ENCODE measurements at regions of chr2 and their contacts with region 1.

Region 1: GRCh38 chr2:100893392-100894089 is 73.6 kb downstream of the NPAS2 start:
- DNase-seq: peak in 2 of 5 donors; percentile 43 to 79
- ATAC-seq: peak in 3 of 4 donors; percentile 63 to 76 (median 76)
- H3K4me3 ChIP-seq: no peak overlapping the region
- H3K27ac ChIP-seq: peak overlapping the region in 11 of 12 donors; percentile 2 to 85 (median 50)
- H3K4me1 ChIP-seq: peaks cover 8 to 70% (median 31%) of the 10 kb centered on the region in 12 donors
- H3K27me3 ChIP-seq: no peaks in the 10 kb centered on the region
- CTCF ChIP-seq: no peak
- POLR2A ChIP-seq: no peak

Region 2: DNA sequence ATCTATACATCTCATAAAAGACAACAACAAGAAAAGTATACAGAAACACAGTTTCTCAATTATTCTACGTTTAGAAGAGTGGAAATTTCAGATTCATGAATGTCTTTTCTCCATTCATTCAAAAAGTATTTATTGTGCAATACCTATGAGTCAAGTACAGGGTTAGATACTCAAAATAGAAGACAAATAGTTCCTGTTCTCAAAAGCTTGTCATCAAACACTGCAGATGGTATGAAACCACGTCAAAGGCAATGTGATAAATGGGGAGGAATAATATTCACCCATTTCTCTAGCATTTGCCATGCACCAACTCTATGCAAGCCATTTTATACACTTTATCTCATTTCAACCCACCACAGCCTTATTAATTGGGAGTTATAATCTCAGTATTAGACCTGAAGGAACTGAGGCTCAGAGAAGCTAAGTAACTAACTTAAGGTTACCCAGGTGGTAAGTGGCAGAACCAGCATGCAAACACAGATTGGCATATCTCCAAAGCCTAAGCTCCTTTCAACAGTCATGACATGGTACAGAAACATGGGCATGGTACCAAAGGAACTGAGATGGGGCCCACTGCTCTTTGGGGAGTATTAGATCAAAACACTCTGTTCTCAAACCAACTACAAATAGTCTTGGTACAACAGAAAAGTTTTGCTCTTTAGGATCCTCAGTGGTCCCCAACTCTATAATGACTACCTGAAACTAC is 140.8 kb before region 1 on chr2:
- intact Hi-C with region 1: loop called in 1 of 10 experiments (anchors 10 kb)
- DNase-seq: no peak
- ATAC-seq: peak; percentile 60 to 85 (median 82)
- H3K4me3 ChIP-seq: no peak overlapping the region
- H3K27ac ChIP-seq: peak overlapping the region in 4 of 12 donors; percentile 8 to 53 (median 26)
- H3K4me1 ChIP-seq: peaks cover 0 to 40% (median 14%) of the 10 kb centered on the region in 12 donors
- H3K27me3 ChIP-seq: no peaks in the 10 kb centered on the region
- CTCF ChIP-seq: no peak
- POLR2A ChIP-seq: no peak

Region 3: GRCh38 chr2:100935372-100935752 is 41.8 kb after region 1 on chr2:
- intact Hi-C with region 1: loop called in 1 of 10 experiments (anchors 5 kb)
- DNase-seq: no peak
- ATAC-seq: peak; percentile 71 to 87 (median 82)
- H3K4me3 ChIP-seq: no peak overlapping the region
- H3K27ac ChIP-seq: peak overlapping the region in 11 of 12 donors; percentile 11 to 89 (median 71)
- H3K4me1 ChIP-seq: peaks cover 0 to 41% (median 15%) of the 10 kb centered on the region in 12 donors
- H3K27me3 ChIP-seq: no peaks in the 10 kb centered on the region
- CTCF ChIP-seq: no peak
- POLR2A ChIP-seq: no peak

Region 4: DNA sequence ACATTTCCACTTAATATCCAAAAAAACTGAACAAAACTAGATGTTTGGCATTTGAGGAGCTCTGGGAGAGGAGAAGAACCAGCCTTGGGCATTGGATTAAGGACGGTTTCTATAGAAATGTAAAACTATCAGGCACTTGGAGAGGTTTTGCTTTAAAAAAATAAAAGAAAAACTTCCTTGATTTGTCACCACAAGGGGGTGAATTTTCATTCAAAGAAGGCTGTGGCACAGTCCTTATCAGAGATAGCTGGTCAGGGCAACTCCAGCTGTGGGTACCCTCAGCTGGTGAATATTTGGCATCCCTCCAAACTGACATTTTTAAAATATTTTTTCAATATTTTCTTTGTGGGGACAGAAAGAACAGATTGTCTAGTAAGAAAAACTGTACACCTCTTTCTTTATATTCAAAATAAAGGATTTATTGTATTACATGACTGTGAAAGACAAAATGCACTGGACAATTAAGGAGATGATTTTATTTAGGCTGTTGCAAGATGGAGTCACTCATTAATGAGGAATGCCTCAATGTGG is 303.7 kb after region 1 on chr2:
- intact Hi-C with region 1: no loop called
- DNase-seq: no peak
- ATAC-seq: no peak
- H3K4me3 ChIP-seq: no peak overlapping the region
- H3K27ac ChIP-seq: no peak overlapping the region
- H3K4me1 ChIP-seq: peaks cover 0 to 20% (median 0%) of the 10 kb centered on the region in 12 donors
- H3K27me3 ChIP-seq: no peaks in the 10 kb centered on the region
- CTCF ChIP-seq: no peak
- POLR2A ChIP-seq: no peak

Region 5: GRCh38 chr2:101479328-101479727 is 585.8 kb after region 1 on chr2:
- intact Hi-C with region 1: no loop called
- DNase-seq: no peak
- ATAC-seq: no peak
- H3K4me3 ChIP-seq: no peak overlapping the region
- H3K27ac ChIP-seq: no peak overlapping the region
- H3K4me1 ChIP-seq: peaks cover 0 to 16% (median under 1%) of the 10 kb centered on the region in 12 donors
- H3K27me3 ChIP-seq: peaks cover 0 to 53% (median 0%) of the 10 kb centered on the region in 9 donors
- CTCF ChIP-seq: no peak
- POLR2A ChIP-seq: no peak

Measured in heart left ventricle (tissue), 16 donors.